ENCODE measurements at regions of chr17 and their contacts with region 1.

Region 1: DNA sequence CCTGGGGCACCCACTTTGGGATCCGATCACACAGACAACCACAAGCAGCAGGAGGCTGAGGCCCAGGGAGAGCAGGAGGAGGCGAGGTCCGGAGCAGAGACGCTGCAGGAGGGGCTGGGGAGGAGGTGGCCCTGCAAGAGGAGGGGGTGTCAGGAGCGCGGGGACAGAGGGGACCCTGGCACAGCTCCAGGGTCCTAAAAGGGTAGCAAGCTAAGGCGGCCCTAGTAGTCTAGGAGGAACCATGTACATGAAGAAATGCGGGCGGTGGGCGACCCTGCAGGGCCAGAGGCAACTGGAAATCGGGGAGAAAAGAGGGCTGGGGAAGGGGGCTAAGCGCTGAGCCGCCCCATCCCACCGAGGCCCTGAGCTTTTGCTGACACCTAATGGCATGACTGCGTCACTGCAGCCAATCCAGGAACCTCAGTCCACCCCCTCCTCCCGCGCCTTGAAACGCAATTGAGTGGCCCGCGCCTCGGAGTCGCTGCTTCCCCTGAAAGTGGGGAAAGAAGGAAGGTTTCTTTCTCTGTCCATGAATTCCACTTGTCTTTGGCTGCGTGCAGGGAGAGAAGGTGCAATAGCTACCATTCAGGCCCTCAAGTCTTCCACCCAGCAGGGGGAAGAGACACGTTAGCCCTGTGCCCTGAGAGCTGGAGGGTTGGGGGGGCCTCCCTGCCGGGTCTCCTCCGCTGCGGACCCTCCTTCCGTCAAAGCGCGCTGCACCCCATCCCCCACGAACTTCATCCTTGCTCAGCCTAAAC is 1.8 kb downstream of the ASGR1 start:
- DNase-seq: peak; percentile 60 to 97 (median 78)

Region 2: DNA sequence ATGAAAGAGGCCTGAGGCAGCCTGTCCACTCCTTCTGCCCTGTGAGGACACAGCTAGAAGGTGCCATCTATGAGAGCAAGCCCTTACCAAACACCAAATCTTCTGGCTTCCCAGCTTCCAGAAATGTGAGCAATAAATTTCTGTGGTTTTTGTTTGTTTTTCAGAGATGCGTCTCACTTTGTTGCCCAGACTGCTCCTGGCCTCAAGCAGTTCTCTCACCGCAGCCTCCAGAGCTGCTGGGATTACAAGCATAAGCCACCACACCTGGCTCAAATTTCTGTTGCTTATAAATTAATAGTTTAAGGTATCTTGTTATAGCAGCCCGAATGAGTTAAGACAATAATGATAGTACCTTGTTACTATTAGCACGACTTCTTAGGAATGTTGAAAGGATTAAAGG is 121.0 kb before region 1 on chr17:
- intact Hi-C with region 1: loop called (anchors 2 kb)
- DNase-seq: no peak

Region 3: DNA sequence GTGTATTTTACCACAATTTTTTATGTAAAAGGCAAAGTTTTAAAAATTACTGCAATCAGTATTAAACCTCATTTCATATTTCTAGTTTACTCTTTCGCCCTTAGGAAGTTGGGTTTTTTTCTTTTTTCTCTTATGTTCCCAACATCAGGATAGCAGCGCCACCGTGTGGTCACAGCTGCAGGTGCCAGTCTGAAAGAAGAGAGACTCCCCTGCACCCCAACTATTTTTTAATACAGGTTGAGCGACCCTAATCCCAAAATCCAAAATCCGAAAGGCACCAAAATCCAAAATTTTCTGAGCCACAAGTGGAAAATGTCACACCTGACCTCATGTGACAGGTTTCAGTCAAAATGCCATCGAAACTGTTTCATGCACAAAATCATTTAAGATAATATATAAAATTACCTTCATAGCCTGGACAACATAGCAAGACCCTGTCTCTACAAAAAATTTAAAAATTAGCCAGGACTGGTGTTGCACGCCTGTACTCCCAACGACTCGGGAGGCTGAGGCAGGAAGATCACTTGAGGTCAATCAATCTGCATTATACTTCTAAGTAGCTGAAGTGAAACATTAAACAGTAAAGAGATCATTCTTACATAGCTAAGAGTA is 41.0 kb before region 1 on chr17:
- intact Hi-C with region 1: loop called (anchors 5 kb)
- DNase-seq: peak; percentile 31 to 95 (median 78)